ENCODE measurements at regions of chr22 and their contacts with region 1.

Region 1: GRCh38 chr22:36239401-36240171 is at the start of gene APOL2:
- DNase-seq: peak; percentile 74 to 93
- ATAC-seq: peak; percentile 94 to 98 (median 95)
- H3K4me3 ChIP-seq: peak within 1 kb of the TSS; percentile 99
- H3K4me3 Mint-ChIP-seq: peak within 1 kb of the TSS; percentile 99
- H3K27ac ChIP-seq: peak within 1 kb of the TSS; percentile 95
- H3K27ac Mint-ChIP-seq: peak within 1 kb of the TSS; percentile 98
- H3K4me1 ChIP-seq: peaks cover 43% of the 10 kb centered on the region
- H3K4me1 Mint-ChIP-seq: peaks cover 49 to 52% of the 10 kb centered on the region in 2 donors
- H3K27me3 ChIP-seq: no peaks in the 10 kb centered on the region
- H3K27me3 Mint-ChIP-seq: no peaks in the 10 kb centered on the region
- CTCF ChIP-seq: peak; percentile 57
- total RNA-seq, gene APOL2: 51.7 to 112 (median 67.2) TPM

Region 2: GRCh38 chr22:36160499-36160942 is 79.1 kb before region 1 on chr22 and contains the start of gene APOL3:
- intact Hi-C with region 1: loop called (anchors 5 kb)
- DNase-seq: peak; percentile 49 to 83
- ATAC-seq: peak; percentile 32 to 55 (median 40)
- H3K4me3 ChIP-seq: peak within 1 kb of the TSS; percentile 74
- H3K4me3 Mint-ChIP-seq: peak within 1 kb of the TSS; percentile 95
- H3K27ac ChIP-seq: peak within 1 kb of the TSS; percentile 96
- H3K27ac Mint-ChIP-seq: peak within 1 kb of the TSS; percentile 99 to 100
- H3K4me1 ChIP-seq: peaks cover 79% of the 10 kb centered on the region
- H3K4me1 Mint-ChIP-seq: peaks cover 77 to 81% of the 10 kb centered on the region in 2 donors
- H3K27me3 ChIP-seq: no peaks in the 10 kb centered on the region
- H3K27me3 Mint-ChIP-seq: no peaks in the 10 kb centered on the region
- CTCF ChIP-seq: no peak
- total RNA-seq, gene APOL3: 105 to 166 (median 111) TPM

Region 3: GRCh38 chr22:36184433-36185025 is 55.1 kb before region 1 on chr22:
- intact Hi-C with region 1: no loop called
- DNase-seq: no peak
- ATAC-seq: no peak
- H3K4me3 ChIP-seq: no peak overlapping the region
- H3K4me3 Mint-ChIP-seq: no peak overlapping the region
- H3K27ac ChIP-seq: no peak overlapping the region
- H3K27ac Mint-ChIP-seq: no peak overlapping the region
- H3K4me1 ChIP-seq: peaks cover 6% of the 10 kb centered on the region
- H3K4me1 Mint-ChIP-seq: peaks cover 0 to 5% of the 10 kb centered on the region in 2 donors
- H3K27me3 ChIP-seq: no peaks in the 10 kb centered on the region
- H3K27me3 Mint-ChIP-seq: no peaks in the 10 kb centered on the region
- CTCF ChIP-seq: no peak

Region 4: GRCh38 chr22:36252754-36253517 is 13.3 kb after region 1 on chr22 and contains the start of gene APOL1:
- intact Hi-C with region 1: no loop called
- DNase-seq: peak; percentile 31 to 83
- ATAC-seq: peak; percentile 95 to 98 (median 96)
- H3K4me3 ChIP-seq: peak within 1 kb of the TSS; percentile 40
- H3K4me3 Mint-ChIP-seq: peak within 1 kb of the TSS; percentile 92
- H3K27ac ChIP-seq: peak within 1 kb of the TSS; percentile 64
- H3K27ac Mint-ChIP-seq: peak within 1 kb of the TSS; percentile 95 to 98
- H3K4me1 ChIP-seq: peaks cover 45% of the 10 kb centered on the region
- H3K4me1 Mint-ChIP-seq: peaks cover 49 to 63% of the 10 kb centered on the region in 2 donors
- H3K27me3 ChIP-seq: no peaks in the 10 kb centered on the region
- H3K27me3 Mint-ChIP-seq: no peaks in the 10 kb centered on the region
- CTCF ChIP-seq: no peak
- total RNA-seq, gene APOL1: 39.5 to 51.2 (median 49.6) TPM